Breast epithelium (tissue), 4 donors: ENCODE measurements at regions of chr11 and their contacts with region 1.

Region 1: GRCh38 chr11:19360156-19360555 is 119.4 kb upstream of the E2F8 start:
- DNase-seq: no peak
- H3K4me3 ChIP-seq: no peak overlapping the region
- H3K27ac ChIP-seq: no peak overlapping the region
- H3K4me1 ChIP-seq: no peaks in the 10 kb centered on the region
- H3K27me3 ChIP-seq: peaks cover 0 to 32% of the 10 kb centered on the region in 2 donors
- CTCF ChIP-seq: no peak
- POLR2A ChIP-seq: no peak

Region 2: DNA sequence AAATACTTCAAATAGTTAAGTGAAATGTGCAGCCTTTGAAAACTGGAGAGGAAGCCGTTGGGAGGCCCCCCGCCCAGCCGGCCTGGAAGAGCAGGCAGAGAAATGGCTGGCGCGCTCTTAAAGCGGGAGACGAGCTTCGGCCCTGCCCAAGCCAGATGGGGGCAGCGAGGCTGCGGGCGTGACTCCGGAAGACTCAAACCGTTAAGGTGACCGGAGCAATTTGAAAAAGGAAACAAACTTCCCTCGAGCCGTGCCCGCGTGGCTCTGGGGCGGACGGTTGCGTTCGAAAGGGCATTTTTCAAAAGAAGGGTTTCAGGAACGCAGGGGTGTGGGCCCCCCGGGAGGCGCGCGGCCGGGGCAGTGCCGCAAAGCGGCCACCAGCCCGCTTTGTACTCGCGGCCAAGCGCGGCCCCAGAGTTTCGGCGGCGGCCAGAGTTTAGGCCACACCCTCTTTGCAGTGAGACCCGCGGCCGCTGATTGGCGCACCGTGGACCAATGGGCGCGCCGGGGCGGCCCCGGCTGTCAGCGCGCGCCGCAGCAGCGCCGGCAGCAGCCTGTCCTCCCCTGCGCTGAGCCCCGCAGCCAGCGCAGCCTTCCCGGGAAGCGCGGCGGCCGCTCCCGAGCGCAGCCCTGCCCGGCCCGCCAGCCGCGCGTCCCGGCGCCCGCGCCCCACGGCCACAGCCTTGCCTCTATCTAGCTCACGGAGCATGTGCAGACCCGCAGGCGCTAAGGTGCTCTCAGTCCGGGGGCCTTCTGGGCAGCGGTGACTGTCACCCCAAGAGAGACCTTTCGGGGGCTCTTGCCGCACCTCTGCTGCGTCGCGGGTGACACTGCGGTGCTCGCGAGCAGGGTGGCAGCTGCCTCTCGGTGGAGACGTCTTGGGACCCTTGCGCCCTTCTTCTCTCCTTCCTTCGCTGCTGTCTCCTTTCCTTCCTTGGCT is 352.4 kb after region 1 on chr11 and contains the start of gene NAV2:
- intact Hi-C with region 1: loop called (anchors 5 kb)
- DNase-seq: peak; percentile 88 to 92
- H3K4me3 ChIP-seq: peak within 1 kb of the TSS; percentile 67 to 87 (median 77)
- H3K27ac ChIP-seq: peak within 1 kb of the TSS; percentile 92 to 93
- H3K4me1 ChIP-seq: peaks cover 6 to 7% of the 10 kb centered on the region in 2 donors
- H3K27me3 ChIP-seq: peaks cover 3 to 23% of the 10 kb centered on the region in 2 donors
- CTCF ChIP-seq: peak in 1 of 3 donors; percentile 14
- POLR2A ChIP-seq: no peak
- total RNA-seq, gene NAV2: 28.2 to 61.8 (median 31.4) TPM